MCF 10A (cell line): ENCODE measurements at regions of chr13 and their contacts with region 1.

Region 1: GRCh38 chr13:73365240-73365639 is 306.4 kb downstream of the KLF5 start:
- DNase-seq: no peak
- H3K4me3 Mint-ChIP-seq: peak overlapping the region; percentile 15
- H3K27ac Mint-ChIP-seq: no peak overlapping the region
- H3K4me1 Mint-ChIP-seq: peaks cover 21% of the 10 kb centered on the region
- H3K27me3 Mint-ChIP-seq: no peaks in the 10 kb centered on the region
- CTCF ChIP-seq: no peak

Region 2: GRCh38 chr13:73081256-73081915 is 283.9 kb before region 1 on chr13:
- CTCF ChIA-PET with region 1: interaction called, 3 read pairs
- POLR2A ChIA-PET with region 1: interaction called, 34 read pairs
- intact Hi-C with region 1: no loop called
- DNase-seq: no peak
- H3K4me3 Mint-ChIP-seq: no peak overlapping the region
- H3K27ac Mint-ChIP-seq: peak overlapping the region; percentile 93
- H3K4me1 Mint-ChIP-seq: peaks cover 20% of the 10 kb centered on the region
- H3K27me3 Mint-ChIP-seq: no peaks in the 10 kb centered on the region
- CTCF ChIP-seq: no peak

Region 3: DNA sequence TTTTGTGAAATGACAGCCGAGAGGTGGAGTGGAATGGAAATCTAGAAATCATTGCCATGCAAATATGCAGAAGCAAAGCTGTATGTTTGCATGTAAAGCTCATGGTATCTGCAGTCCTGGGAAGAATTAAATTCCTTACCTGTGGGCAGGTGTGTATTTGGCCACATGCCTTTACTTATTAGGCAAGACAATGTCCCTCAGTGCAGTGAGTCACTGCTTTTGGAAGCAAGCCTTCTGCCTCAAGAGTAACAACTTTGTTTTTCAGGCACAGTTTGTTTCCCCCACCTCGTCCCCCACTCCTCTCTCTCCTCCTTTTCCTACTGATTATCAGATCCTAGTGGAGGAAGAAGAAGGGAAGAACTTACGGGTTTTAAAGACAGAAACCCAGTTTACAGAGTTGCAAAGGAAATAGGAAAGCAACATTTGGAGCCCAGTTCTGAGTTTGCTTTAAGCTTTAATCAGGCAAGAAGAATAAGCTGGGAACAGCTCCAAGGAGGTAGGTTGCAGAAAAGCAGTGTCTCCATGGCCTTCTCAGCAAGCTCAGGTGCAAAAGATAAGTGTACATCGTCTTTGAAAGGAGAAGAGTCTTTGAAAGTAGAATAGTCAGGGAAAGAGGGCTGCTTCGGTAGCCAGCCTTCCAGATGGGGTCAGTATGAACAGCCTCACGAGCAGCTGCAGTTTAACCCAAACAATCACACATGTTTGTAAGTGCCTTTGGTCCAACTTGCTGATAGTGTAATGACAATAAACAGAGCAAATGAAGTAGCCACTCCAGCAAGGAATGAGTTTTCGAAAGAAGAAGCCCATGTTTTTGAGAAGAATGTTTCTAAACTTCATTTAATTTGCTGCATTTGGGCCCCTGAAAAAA is 116.3 kb before region 1 on chr13:
- CTCF ChIA-PET with region 1: interaction called, 9 read pairs
- POLR2A ChIA-PET with region 1: interaction called, 34 read pairs
- intact Hi-C with region 1: no loop called
- DNase-seq: peak; percentile 92
- H3K4me3 Mint-ChIP-seq: peak overlapping the region; percentile 34
- H3K27ac Mint-ChIP-seq: peak overlapping the region; percentile 85
- H3K4me1 Mint-ChIP-seq: peaks cover 28% of the 10 kb centered on the region
- H3K27me3 Mint-ChIP-seq: no peaks in the 10 kb centered on the region
- CTCF ChIP-seq: no peak

Region 4: DNA sequence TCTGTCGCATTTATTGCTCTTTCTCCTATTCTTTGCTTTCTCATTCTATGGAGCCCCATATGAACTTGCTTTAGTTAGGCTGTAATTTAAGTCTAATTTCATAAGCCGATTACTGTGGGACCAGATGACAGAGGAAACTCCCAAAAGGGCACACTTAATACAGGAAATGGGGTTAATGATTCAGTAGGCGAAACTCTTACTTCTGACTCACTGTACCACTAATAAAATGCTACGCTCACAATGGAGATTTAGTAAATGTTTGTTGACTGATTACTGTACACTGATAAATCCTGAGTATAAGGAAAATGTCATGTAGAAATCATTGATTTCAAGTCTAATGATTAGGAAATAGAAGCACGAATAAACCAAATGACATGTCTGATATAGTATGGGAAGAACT is 30.0 kb before region 1 on chr13:
- CTCF ChIA-PET with region 1: interaction called, 4 read pairs
- POLR2A ChIA-PET with region 1: interaction called, 41 read pairs
- intact Hi-C with region 1: loop called (anchors 2 kb)
- DNase-seq: peak; percentile 89
- H3K4me3 Mint-ChIP-seq: peak overlapping the region; percentile 44
- H3K27ac Mint-ChIP-seq: peak overlapping the region; percentile 97
- H3K4me1 Mint-ChIP-seq: peaks cover 41% of the 10 kb centered on the region
- H3K27me3 Mint-ChIP-seq: no peaks in the 10 kb centered on the region
- CTCF ChIP-seq: no peak

Region 5: DNA sequence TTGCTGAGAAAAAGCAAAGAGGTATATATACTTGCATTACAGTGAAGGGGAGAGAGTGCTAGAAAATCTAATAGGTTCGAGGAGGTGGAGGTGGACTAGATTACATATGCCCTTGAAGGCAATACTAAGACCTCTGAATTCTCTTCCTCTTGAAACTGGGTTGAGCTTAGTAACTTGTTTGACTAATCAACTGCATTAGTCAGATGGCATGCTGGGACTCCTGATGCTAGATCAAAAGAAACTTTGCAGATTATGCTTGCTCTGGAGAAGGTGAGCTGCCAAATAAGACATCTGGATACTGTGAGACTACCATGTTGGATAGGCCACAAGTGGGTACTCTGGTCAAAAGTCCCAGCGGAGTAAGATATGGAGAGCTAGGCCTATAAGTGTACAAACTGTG is 24.9 kb after region 1 on chr13:
- CTCF ChIA-PET with region 1: interaction called, 3 read pairs
- POLR2A ChIA-PET with region 1: interaction called, 19 read pairs
- intact Hi-C with region 1: no loop called
- DNase-seq: no peak
- H3K4me3 Mint-ChIP-seq: no peak overlapping the region
- H3K27ac Mint-ChIP-seq: no peak overlapping the region
- H3K4me1 Mint-ChIP-seq: no peaks in the 10 kb centered on the region
- H3K27me3 Mint-ChIP-seq: no peaks in the 10 kb centered on the region
- CTCF ChIP-seq: no peak

Region 6: DNA sequence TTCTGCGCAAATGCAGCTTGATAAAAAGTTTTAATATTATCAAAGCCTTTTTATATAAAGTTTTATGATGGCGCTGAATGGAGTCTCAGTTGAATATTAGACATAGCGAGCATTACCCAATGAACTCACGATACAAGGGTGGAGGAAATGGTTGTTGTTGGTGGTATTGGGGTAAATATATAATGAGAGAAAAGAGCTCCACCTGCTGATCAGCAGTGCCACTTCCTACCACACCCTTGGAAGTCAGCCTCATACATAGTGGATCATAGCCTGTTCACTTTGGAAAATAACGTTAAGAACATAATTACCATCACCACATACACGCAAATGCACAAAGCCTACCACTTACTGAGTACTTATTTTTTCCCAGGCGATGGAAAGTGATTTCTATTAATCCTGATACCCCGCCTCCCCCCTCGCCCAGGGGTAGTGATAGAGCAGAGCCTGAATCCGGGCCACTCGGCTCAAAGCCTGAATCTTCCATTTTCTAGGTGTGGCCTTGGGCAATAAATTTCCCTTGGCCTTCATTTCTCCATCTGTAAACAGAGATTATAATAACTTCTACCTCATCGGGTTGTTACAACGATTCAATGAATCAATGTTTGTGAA is 51.9 kb after region 1 on chr13:
- CTCF ChIA-PET with region 1: interaction called, 11 read pairs
- POLR2A ChIA-PET with region 1: interaction called, 72 read pairs
- intact Hi-C with region 1: no loop called
- DNase-seq: peak; percentile 53
- H3K4me3 Mint-ChIP-seq: no peak overlapping the region
- H3K27ac Mint-ChIP-seq: no peak overlapping the region
- H3K4me1 Mint-ChIP-seq: peaks cover 25% of the 10 kb centered on the region
- H3K27me3 Mint-ChIP-seq: no peaks in the 10 kb centered on the region
- CTCF ChIP-seq: peak; percentile 25

Region 7: GRCh38 chr13:73465617-73465971 is 100.4 kb after region 1 on chr13:
- CTCF ChIA-PET with region 1: interaction called, 4 read pairs
- POLR2A ChIA-PET with region 1: interaction called, 16 read pairs
- intact Hi-C with region 1: no loop called
- DNase-seq: peak; percentile 76
- H3K4me3 Mint-ChIP-seq: no peak overlapping the region
- H3K27ac Mint-ChIP-seq: peak overlapping the region; percentile 90
- H3K4me1 Mint-ChIP-seq: peaks cover 15% of the 10 kb centered on the region
- H3K27me3 Mint-ChIP-seq: no peaks in the 10 kb centered on the region
- CTCF ChIP-seq: no peak

Region 8: GRCh38 chr13:74389056-74389455 is 1023.8 kb after region 1 on chr13:
- CTCF ChIA-PET with region 1: no interaction called
- POLR2A ChIA-PET with region 1: no interaction called
- intact Hi-C with region 1: no loop called
- DNase-seq: no peak
- H3K4me3 Mint-ChIP-seq: no peak overlapping the region
- H3K27ac Mint-ChIP-seq: no peak overlapping the region
- H3K4me1 Mint-ChIP-seq: no peaks in the 10 kb centered on the region
- H3K27me3 Mint-ChIP-seq: no peaks in the 10 kb centered on the region
- CTCF ChIP-seq: no peak